Posterior cingulate gyrus (tissue), 11 donors: ENCODE measurements at regions of chr2 and their contacts with region 1.

Region 1: GRCh38 chr2:172465417-172466334 is 38.3 kb downstream of the ITGA6 start:
- DNase-seq: peak in 8 of 10 donors; percentile 54 to 88 (median 69)

Region 2: GRCh38 chr2:172172513-172173173 is 293.0 kb before region 1 on chr2:
- intact Hi-C with region 1: loop called (anchors 1 kb)
- DNase-seq: peak; percentile 42 to 94 (median 65)